ENCODE measurements at regions of chr10 and their contacts with region 1.

Region 1: DNA sequence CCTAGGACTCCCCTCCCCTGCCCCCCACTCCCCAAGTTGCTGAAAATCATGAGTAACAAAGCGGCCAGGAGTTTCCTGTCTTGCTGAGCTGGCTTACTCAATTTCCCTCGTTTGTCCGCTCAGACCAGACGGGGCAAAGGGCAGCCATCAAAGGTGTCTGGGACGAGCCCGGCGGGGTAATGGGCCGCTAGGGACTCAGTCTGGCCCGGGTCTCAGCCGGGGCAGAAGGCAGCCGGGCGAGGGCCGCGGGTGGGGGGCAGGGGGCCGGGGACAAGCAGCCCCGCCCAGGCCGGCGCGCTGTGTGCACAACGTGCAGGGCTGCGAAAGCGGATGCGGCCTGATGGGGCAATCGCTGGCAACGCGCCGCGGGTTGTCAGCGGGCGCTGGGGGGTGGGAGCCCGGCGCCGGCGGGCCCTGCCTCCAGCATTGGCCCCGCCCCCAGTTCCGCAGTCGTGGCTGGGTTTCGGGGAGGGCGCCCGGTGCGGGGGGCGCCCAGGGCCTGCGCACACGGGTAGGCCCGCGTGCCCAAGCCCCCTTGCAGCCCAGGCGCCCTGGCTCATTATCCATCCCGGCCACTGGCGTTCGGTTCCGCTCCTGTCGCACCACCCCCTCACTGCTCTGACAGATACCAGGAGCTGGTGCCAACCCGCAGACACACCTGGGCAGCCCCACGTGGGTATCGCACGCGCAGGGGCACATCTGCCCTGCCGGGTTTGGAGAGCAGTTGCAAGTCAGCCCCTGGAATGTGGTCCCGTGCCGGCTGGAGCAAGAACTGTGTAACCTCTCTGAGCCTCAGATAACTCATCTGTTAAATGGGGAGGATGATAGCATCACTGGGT is 35.1 kb downstream of the DNAJB12 start:
- DNase-seq: peak; percentile 97 to 98 (median 97)
- ATAC-seq: peak; percentile 53 to 81 (median 78)
- H3K4me3 ChIP-seq: peak overlapping the region; percentile 36 to 54 (median 53)
- H3K27ac ChIP-seq: peak overlapping the region; percentile 88 to 97 (median 95)
- H3K4me1 ChIP-seq: peaks cover 0 to 58% (median 33%) of the 10 kb centered on the region in 4 donors
- H3K27me3 ChIP-seq: no peaks in the 10 kb centered on the region
- CTCF ChIP-seq: no peak
- POLR2A ChIP-seq: peak; percentile 80

Region 2: GRCh38 chr10:72223743-72224101 is 95.9 kb before region 1 on chr10:
- intact Hi-C with region 1: loop called in 1 of 2 experiments (anchors 10 kb)
- DNase-seq: no peak
- ATAC-seq: peak; percentile 29 to 56 (median 46)
- H3K4me3 ChIP-seq: no peak overlapping the region
- H3K27ac ChIP-seq: peak overlapping the region; percentile 65 to 74 (median 71)
- H3K4me1 ChIP-seq: peaks cover 0 to 46% (median 9%) of the 10 kb centered on the region in 4 donors
- H3K27me3 ChIP-seq: no peaks in the 10 kb centered on the region
- CTCF ChIP-seq: no peak
- POLR2A ChIP-seq: peak; percentile 22

Region 3: GRCh38 chr10:72273410-72274212 is 46.0 kb before region 1 on chr10 and contains the start of gene DDIT4:
- intact Hi-C with region 1: loop called (anchors 5 kb)
- DNase-seq: peak; percentile 100
- ATAC-seq: peak; percentile 69 to 88 (median 78)
- H3K4me3 ChIP-seq: peak within 1 kb of the TSS; percentile 81 to 93 (median 89)
- H3K27ac ChIP-seq: peak within 1 kb of the TSS; percentile 97 to 99 (median 99)
- H3K4me1 ChIP-seq: peaks cover 0 to 19% (median 4%) of the 10 kb centered on the region in 4 donors
- H3K27me3 ChIP-seq: no peaks in the 10 kb centered on the region
- CTCF ChIP-seq: peak in 1 of 4 donors; percentile 3
- POLR2A ChIP-seq: peak; percentile 100
- total RNA-seq, gene DDIT4: 51.7 to 180 (median 143) TPM

Measured in right lobe of liver (tissue), 6 donors.